ENCODE measurements at regions of chr2 and their contacts with region 1.

Region 1: DNA sequence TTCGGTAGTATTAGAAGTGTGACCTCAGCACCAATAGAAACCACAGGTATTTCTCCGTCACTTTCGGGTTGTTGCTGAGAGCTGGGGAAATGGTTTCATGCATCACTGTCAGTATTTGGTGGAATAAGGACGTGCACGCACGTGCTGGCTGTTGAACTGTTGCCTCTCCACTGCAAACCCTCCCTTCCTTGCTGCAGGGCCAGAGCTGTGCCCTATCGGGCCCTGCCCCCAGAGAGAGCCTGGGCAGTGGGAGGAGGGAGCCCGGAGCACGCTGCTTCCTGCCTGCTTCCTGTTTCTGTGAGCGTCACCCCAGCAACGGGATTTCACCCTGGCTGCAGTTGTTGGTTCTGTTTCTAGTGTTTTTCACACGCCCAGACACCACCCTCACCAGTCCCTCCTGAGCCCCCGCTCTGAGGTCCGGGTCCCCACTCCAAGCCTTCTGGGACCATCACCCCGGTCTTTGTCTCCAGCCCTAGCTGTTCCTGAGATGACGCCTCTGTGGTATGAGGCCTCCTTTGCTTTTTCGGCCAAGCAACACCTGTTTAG is 47.4 kb downstream of the LRRFIP1 start:
- DNase-seq: peak; percentile 41
- ATAC-seq: peak; percentile 74
- H3K4me3 ChIP-seq: no peak overlapping the region
- H3K27ac ChIP-seq: no peak overlapping the region
- H3K4me1 ChIP-seq: peaks cover 22% of the 10 kb centered on the region
- H3K27me3 ChIP-seq: no peaks in the 10 kb centered on the region
- CTCF ChIP-seq: no peak

Region 2: GRCh38 chr2:237686659-237687136 is 11.9 kb after region 1 on chr2:
- CTCF ChIA-PET with region 1: interaction called, 13 read pairs
- POLR2A ChIA-PET with region 1: no interaction called
- intact Hi-C with region 1: loop called (anchors 1 kb)
- DNase-seq: no peak
- ATAC-seq: no peak
- H3K4me3 ChIP-seq: no peak overlapping the region
- H3K27ac ChIP-seq: no peak overlapping the region
- H3K4me1 ChIP-seq: peaks cover 42% of the 10 kb centered on the region
- H3K27me3 ChIP-seq: no peaks in the 10 kb centered on the region
- CTCF ChIP-seq: peak; percentile 49

Region 3: GRCh38 chr2:237691908-237692600 is 17.2 kb after region 1 on chr2:
- CTCF ChIA-PET with region 1: interaction called, 13 read pairs
- POLR2A ChIA-PET with region 1: no interaction called
- intact Hi-C with region 1: loop called (anchors 1 kb)
- DNase-seq: peak; percentile 86
- ATAC-seq: peak; percentile 59
- H3K4me3 ChIP-seq: peak overlapping the region; percentile 94
- H3K27ac ChIP-seq: peak overlapping the region; percentile 91
- H3K4me1 ChIP-seq: peaks cover 68% of the 10 kb centered on the region
- H3K27me3 ChIP-seq: no peaks in the 10 kb centered on the region
- CTCF ChIP-seq: no peak

Region 4: GRCh38 chr2:237744613-237745249 is 69.9 kb after region 1 on chr2:
- CTCF ChIA-PET with region 1: interaction called, 18 read pairs
- POLR2A ChIA-PET with region 1: interaction called, 4 read pairs
- intact Hi-C with region 1: loop called (anchors 1 kb)
- DNase-seq: peak; percentile 75
- ATAC-seq: peak; percentile 83
- H3K4me3 ChIP-seq: no peak overlapping the region
- H3K27ac ChIP-seq: no peak overlapping the region; the same call in 1 of the 2 replicates
- H3K4me1 ChIP-seq: peaks cover 31% of the 10 kb centered on the region
- H3K27me3 ChIP-seq: no peaks in the 10 kb centered on the region
- CTCF ChIP-seq: peak; percentile 95

Region 5: GRCh38 chr2:237774802-237775553 is 100.2 kb after region 1 on chr2:
- CTCF ChIA-PET with region 1: no interaction called
- POLR2A ChIA-PET with region 1: no interaction called
- intact Hi-C with region 1: loop called (anchors 1 kb)
- DNase-seq: peak; percentile 72
- ATAC-seq: peak; percentile 98
- H3K4me3 ChIP-seq: no peak overlapping the region
- H3K27ac ChIP-seq: no peak overlapping the region
- H3K4me1 ChIP-seq: no peaks in the 10 kb centered on the region
- H3K27me3 ChIP-seq: no peaks in the 10 kb centered on the region
- CTCF ChIP-seq: peak; percentile 76